ENCODE measurements at regions of chr3 and their contacts with region 1.

Region 1: GRCh38 chr3:15557511-15557946 is 36.0 kb upstream of the COLQ start:
- DNase-seq: peak in 2 of 5 donors; percentile 37 to 46
- H3K4me3 ChIP-seq: no peak overlapping the region
- H3K27ac ChIP-seq: no peak overlapping the region
- H3K4me1 ChIP-seq: no peaks in the 10 kb centered on the region
- H3K27me3 ChIP-seq: no peaks in the 10 kb centered on the region
- CTCF ChIP-seq: peak in 2 of 3 donors; percentile 55 to 58
- EP300 ChIP-seq: no peak
- POLR2A ChIP-seq: no peak

Region 2: GRCh38 chr3:15361494-15362212 is 195.9 kb before region 1 on chr3:
- intact Hi-C with region 1: no loop called
- DNase-seq: no peak
- H3K4me3 ChIP-seq: no peak overlapping the region
- H3K27ac ChIP-seq: peak overlapping the region in 1 of 2 donors; percentile 42
- H3K4me1 ChIP-seq: peaks cover 4% of the 10 kb centered on the region
- H3K27me3 ChIP-seq: no peaks in the 10 kb centered on the region
- CTCF ChIP-seq: no peak
- EP300 ChIP-seq: no peak
- POLR2A ChIP-seq: no peak

Region 3: DNA sequence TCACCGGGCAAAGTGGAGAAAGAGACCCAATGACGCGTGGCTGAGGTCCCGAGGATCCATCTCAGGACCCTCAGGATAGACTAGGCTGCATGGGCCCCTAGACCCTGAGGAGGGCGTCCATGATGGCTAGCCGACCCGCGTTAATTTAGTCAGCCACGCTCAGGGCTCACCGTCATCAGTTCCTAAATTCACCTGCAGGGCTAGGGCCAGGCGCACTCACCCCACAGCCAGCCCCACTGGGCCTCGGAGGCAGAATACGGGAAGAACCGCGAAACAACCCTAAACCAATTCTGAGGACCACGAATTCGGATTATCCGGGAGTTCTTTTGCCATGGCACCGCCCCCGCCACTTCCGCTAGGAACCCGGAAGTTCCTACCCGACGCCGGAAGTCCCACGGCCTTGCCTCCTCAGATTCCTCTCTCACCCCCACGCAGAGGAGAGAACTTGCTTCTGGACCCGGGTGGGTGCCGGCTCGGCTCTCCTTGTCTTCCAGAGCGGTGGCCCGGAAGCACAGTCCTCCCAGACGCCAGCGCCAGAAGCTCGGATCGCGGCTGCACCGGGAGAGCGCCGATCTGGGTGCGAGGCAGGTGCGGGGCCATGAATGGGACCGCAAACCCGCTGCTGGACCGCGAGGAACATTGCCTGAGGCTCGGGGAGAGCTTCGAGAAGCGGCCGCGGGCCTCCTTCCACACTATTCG is 130.2 kb before region 1 on chr3 and contains the starts of genes EAF1 and METTL6:
- intact Hi-C with region 1: loop called in 2 of 4 experiments (anchors 10 kb)
- DNase-seq: peak; percentile 77 to 89 (median 78)
- H3K4me3 ChIP-seq: peak within 1 kb of the TSS; percentile 73
- H3K27ac ChIP-seq: peak within 1 kb of the TSS; percentile 31 to 49
- H3K4me1 ChIP-seq: peaks cover 9% of the 10 kb centered on the region
- H3K27me3 ChIP-seq: no peaks in the 10 kb centered on the region
- CTCF ChIP-seq: no peak
- EP300 ChIP-seq: no peak
- POLR2A ChIP-seq: no peak
- total RNA-seq, gene EAF1: 8.5 to 16.0 (median 11.9) TPM
- total RNA-seq, gene METTL6: 16.1 to 25.6 (median 23.0) TPM